Endothelial cell of umbilical vein (primary cell): ENCODE measurements at regions of chr4 and their contacts with region 1.

Region 1: GRCh38 chr4:186829740-186830449 is 106.2 kb upstream of the FAT1 start:
- DNase-seq: peak; percentile 90
- H3K4me3 ChIP-seq: no peak overlapping the region
- H3K27ac ChIP-seq: peak overlapping the region; percentile 87
- H3K4me1 ChIP-seq: peaks cover 32% of the 10 kb centered on the region
- H3K27me3 ChIP-seq: no peaks in the 10 kb centered on the region
- CTCF ChIP-seq: no peak
- POLR2A ChIP-seq: no peak

Region 2: GRCh38 chr4:185011408-185011807 is 1818.5 kb before region 1 on chr4:
- CTCF ChIA-PET with region 1: no interaction called
- POLR2A ChIA-PET with region 1: no interaction called
- dilution Hi-C with region 1: no loop called
- intact Hi-C with region 1: loop called (anchors 5 kb)
- DNase-seq: no peak
- H3K4me3 ChIP-seq: no peak overlapping the region
- H3K27ac ChIP-seq: no peak overlapping the region
- H3K4me1 ChIP-seq: no peaks in the 10 kb centered on the region
- H3K27me3 ChIP-seq: peaks cover 43 to 46% of the 10 kb centered on the region in 2 experiments
- CTCF ChIP-seq: peak; percentile 50 to 81
- POLR2A ChIP-seq: no peak

Region 3: DNA sequence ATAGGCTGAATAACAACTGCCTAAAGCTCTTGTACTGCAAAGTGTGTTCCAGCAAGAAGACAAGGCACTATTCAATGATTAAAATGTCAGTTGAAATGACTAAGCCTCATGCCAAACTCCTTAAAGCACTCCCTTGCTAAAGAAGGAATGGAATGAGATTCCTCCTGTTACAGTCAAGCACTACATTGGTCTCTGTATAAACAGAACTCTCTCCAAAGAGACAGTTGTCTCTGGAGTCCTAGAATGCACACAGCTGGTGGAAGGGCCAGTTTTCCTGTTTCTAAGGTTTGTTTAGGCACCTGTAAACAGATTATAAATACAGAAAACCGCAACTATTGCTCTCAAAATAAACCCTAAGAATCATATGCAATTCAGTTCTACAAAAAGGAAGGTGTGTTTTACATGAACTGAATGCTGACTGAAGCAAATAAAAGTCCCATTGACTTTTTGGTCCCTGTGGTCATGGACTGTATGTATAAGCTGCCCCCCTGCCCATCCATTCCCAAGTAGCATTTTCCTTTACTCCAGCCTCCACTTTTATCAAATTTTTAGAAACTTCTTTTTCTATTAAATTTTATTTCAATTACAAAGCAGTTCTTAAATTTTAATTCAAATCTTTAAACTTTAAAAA is 153.2 kb before region 1 on chr4:
- CTCF ChIA-PET with region 1: no interaction called
- POLR2A ChIA-PET with region 1: no interaction called
- dilution Hi-C with region 1: no loop called
- intact Hi-C with region 1: no loop called
- DNase-seq: no peak
- H3K4me3 ChIP-seq: no peak overlapping the region
- H3K27ac ChIP-seq: no peak overlapping the region
- H3K4me1 ChIP-seq: no peaks in the 10 kb centered on the region
- H3K27me3 ChIP-seq: no peaks in the 10 kb centered on the region
- CTCF ChIP-seq: no peak
- POLR2A ChIP-seq: no peak

Region 4: DNA sequence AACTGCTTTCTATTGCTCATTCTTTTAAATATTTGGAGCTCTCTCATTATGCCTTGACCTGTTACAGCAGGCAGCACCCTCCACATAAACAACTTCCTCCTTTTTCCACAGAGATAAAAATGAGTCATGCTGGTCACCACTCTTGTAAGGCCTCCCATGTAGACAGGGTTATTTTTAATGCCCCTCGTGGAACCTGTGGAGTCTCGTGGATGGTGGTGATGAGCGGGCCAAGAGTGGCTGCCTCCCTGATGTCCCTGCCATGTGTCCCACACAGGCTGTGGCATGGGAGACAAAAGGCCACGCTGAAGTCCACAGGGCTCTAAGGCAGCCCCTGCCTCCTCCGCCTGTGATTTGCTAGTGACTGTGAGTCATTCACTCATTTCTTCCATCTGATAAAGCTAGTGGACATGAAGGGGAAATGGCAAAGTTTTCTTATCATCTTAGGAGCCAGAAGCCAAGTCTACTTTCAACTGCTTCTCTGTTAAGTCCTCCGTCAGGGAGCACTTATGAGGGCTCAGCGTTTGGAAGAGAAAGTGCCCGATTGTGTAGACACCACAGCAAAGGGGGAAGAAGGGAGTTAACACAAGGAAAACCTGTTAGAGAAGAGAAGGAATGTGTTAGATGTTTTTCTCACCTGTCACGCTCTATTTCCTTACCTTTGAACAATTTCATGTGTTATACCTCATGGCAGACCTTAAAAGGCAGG is 15.4 kb after region 1 on chr4:
- CTCF ChIA-PET with region 1: interaction called, 8 read pairs
- POLR2A ChIA-PET with region 1: no interaction called
- dilution Hi-C with region 1: no loop called
- intact Hi-C with region 1: loop called (anchors 1 kb)
- DNase-seq: peak; percentile 95
- H3K4me3 ChIP-seq: peak overlapping the region in 1 of 3 experiments; percentile 34
- H3K27ac ChIP-seq: peak overlapping the region; percentile 95
- H3K4me1 ChIP-seq: peaks cover 31% of the 10 kb centered on the region
- H3K27me3 ChIP-seq: no peaks in the 10 kb centered on the region
- CTCF ChIP-seq: no peak
- POLR2A ChIP-seq: peak; percentile 18

Region 5: GRCh38 chr4:186900232-186900900 is 70.5 kb after region 1 on chr4:
- CTCF ChIA-PET with region 1: no interaction called
- POLR2A ChIA-PET with region 1: no interaction called
- dilution Hi-C with region 1: no loop called
- intact Hi-C with region 1: loop called (anchors 1 kb)
- DNase-seq: peak; percentile 91
- H3K4me3 ChIP-seq: no peak overlapping the region
- H3K27ac ChIP-seq: peak overlapping the region; percentile 96
- H3K4me1 ChIP-seq: peaks cover 18% of the 10 kb centered on the region
- H3K27me3 ChIP-seq: no peaks in the 10 kb centered on the region
- CTCF ChIP-seq: no peak
- POLR2A ChIP-seq: no peak

Region 6: GRCh38 chr4:186936496-186937375 is 106.8 kb after region 1 on chr4:
- CTCF ChIA-PET with region 1: no interaction called
- POLR2A ChIA-PET with region 1: no interaction called
- dilution Hi-C with region 1: no loop called
- intact Hi-C with region 1: loop called (anchors 2 kb)
- DNase-seq: peak; percentile 55
- H3K4me3 ChIP-seq: peak overlapping the region in 1 of 3 experiments; percentile 30
- H3K27ac ChIP-seq: no peak overlapping the region
- H3K4me1 ChIP-seq: no peaks in the 10 kb centered on the region
- H3K27me3 ChIP-seq: no peaks in the 10 kb centered on the region
- CTCF ChIP-seq: no peak
- POLR2A ChIP-seq: no peak

Region 7: DNA sequence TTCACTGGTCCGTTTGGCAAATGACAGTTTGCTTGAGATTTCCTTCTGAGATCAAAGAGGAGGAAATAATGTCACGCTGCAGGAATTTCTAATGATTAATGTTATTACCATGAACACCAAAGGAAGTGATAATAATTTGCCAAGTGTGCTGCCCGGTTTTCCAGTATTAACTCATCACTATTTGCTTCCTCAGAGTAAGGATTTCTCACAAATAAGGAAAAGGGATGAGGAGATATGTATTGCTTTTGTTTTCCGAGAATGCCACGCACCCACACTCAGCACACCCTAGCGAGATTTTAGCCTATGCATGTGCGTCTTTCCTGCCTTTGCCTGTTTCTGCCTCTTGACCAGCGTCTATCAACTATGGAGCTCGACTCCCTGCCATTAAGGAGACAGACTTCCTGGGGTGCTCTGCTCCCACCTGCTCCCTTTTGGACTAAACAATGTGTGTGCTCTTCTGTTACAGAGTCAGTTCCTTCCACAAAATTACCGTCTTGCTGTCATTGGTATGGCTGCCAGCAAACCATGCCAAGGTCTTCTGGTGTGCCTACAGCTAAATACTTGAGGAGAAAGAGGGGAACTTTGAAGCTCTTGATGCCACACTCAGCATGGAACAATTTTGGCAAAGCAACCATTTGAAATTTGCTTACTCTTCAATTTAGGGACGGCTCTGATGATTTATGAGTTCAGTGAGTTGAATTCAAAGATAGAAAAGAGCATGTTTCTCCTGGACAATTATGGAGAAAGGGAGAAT is 772.6 kb after region 1 on chr4:
- CTCF ChIA-PET with region 1: no interaction called
- POLR2A ChIA-PET with region 1: no interaction called
- dilution Hi-C with region 1: no loop called
- intact Hi-C with region 1: loop called (anchors 5 kb)
- DNase-seq: peak; percentile 77
- H3K4me3 ChIP-seq: peak overlapping the region in 1 of 3 experiments; percentile 31
- H3K27ac ChIP-seq: peak overlapping the region; percentile 84
- H3K4me1 ChIP-seq: peaks cover 22% of the 10 kb centered on the region
- H3K27me3 ChIP-seq: no peaks in the 10 kb centered on the region
- CTCF ChIP-seq: no peak
- POLR2A ChIP-seq: no peak